ENCODE measurements at regions of chr9 and their contacts with region 1.

Region 1: DNA sequence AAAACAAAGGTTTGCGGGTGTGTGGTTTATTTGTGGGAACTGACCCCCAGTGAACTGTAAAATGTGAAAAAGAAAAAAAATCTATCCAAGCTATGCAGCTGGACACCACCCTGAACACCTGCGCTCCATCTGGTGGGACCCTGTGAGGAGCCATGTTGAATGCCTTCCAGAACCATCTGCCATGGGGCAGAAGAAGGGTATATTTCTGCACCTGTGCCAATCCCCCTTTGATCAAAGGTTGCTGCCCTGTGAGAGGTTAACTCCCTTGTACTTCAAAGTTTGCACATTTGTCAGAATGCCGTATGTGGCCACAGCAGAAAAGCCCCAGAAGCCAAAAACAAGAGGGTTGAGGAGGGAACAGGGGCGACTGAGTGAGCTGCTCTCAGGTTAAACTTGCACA is 148.5 kb upstream of the ALDH1B1 start:
- DNase-seq: no peak
- H3K4me3 ChIP-seq: no peak overlapping the region
- H3K27ac ChIP-seq: no peak overlapping the region
- H3K4me1 ChIP-seq: no peaks in the 10 kb centered on the region
- H3K27me3 ChIP-seq: no peaks in the 10 kb centered on the region
- CTCF ChIP-seq: no peak

Region 2: GRCh38 chr9:38294220-38294960 is 50.4 kb after region 1 on chr9:
- CTCF ChIA-PET with region 1: no interaction called
- POLR2A ChIA-PET with region 1: no interaction called
- intact Hi-C with region 1: loop called (anchors 10 kb)
- DNase-seq: no peak
- H3K4me3 ChIP-seq: no peak overlapping the region
- H3K27ac ChIP-seq: no peak overlapping the region
- H3K4me1 ChIP-seq: no peaks in the 10 kb centered on the region
- H3K27me3 ChIP-seq: no peaks in the 10 kb centered on the region
- CTCF ChIP-seq: no peak

Region 3: GRCh38 chr9:38392235-38393127 is 148.5 kb after region 1 on chr9 and contains the start of gene ALDH1B1:
- CTCF ChIA-PET with region 1: no interaction called
- POLR2A ChIA-PET with region 1: no interaction called
- intact Hi-C with region 1: no loop called
- DNase-seq: peak; percentile 83
- H3K4me3 ChIP-seq: peak within 1 kb of the TSS; percentile 83
- H3K27ac ChIP-seq: peak within 1 kb of the TSS; percentile 80
- H3K4me1 ChIP-seq: peaks cover 21% of the 10 kb centered on the region
- H3K27me3 ChIP-seq: no peaks in the 10 kb centered on the region
- CTCF ChIP-seq: peak; percentile 32; the same call in 1 of the 2 replicates
- total RNA-seq, gene ALDH1B1: 29.0 and 33.1 TPM in 2 replicates

Measured in A673 (cell line).